ENCODE measurements at regions of chr18 and their contacts with region 1.

Region 1: DNA sequence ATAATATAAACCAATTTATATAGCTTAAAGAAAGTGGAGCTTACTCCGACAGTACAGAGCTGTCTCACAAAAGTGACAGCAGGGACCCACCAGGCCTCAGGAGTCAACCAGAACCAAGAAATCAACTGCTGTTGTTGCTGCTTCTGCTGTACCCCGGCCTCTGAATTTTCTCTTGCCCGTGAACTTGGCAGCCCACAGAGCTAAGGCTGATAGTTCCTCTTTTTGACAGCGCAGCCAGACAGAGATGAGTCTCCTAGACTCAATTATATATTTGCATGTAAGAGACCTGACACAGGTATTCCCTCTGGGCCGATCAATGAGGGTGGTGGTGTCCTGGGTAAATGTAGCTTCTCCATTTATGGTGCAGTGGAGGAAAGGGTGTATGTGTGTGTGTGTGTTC is 109.4 kb downstream of the KCTD1 start:
- DNase-seq: no peak
- ATAC-seq: peak; percentile 96
- H3K4me3 ChIP-seq: no peak overlapping the region
- H3K27ac ChIP-seq: no peak overlapping the region
- H3K4me1 ChIP-seq: peaks cover 10% of the 10 kb centered on the region; the same call in 1 of the 2 replicates
- H3K27me3 ChIP-seq: no peaks in the 10 kb centered on the region
- CTCF ChIP-seq: no peak
- EP300 ChIP-seq: no peak
- POLR2A ChIP-seq: no peak
- RAD21 ChIP-seq: 0 out of 2 replicates have a peak, but pooled peaks have one; percentile 2

Region 2: GRCh38 chr18:26121476-26121875 is 317.5 kb before region 1 on chr18:
- CTCF ChIA-PET with region 1: no interaction called
- POLR2A ChIA-PET with region 1: no interaction called
- RAD21 ChIA-PET with region 1: no interaction called
- SMC1A ChIA-PET with region 1: no interaction called
- in situ Hi-C with region 1: no loop called
- intact Hi-C with region 1: no loop called
- DNase-seq: no peak
- ATAC-seq: no peak
- H3K4me3 ChIP-seq: no peak overlapping the region
- H3K27ac ChIP-seq: no peak overlapping the region
- H3K4me1 ChIP-seq: no peaks in the 10 kb centered on the region
- H3K27me3 ChIP-seq: no peaks in the 10 kb centered on the region; a peak in 1 of 4 replicates
- CTCF ChIP-seq: no peak
- EP300 ChIP-seq: no peak
- POLR2A ChIP-seq: no peak
- RAD21 ChIP-seq: no peak

Region 3: GRCh38 chr18:26370037-26370436 is 68.9 kb before region 1 on chr18:
- CTCF ChIA-PET with region 1: no interaction called
- POLR2A ChIA-PET with region 1: no interaction called
- RAD21 ChIA-PET with region 1: no interaction called
- SMC1A ChIA-PET with region 1: no interaction called
- in situ Hi-C with region 1: no loop called
- intact Hi-C with region 1: no loop called
- DNase-seq: no peak
- ATAC-seq: no peak
- H3K4me3 ChIP-seq: no peak overlapping the region
- H3K27ac ChIP-seq: no peak overlapping the region
- H3K4me1 ChIP-seq: no peaks in the 10 kb centered on the region
- H3K27me3 ChIP-seq: no peaks in the 10 kb centered on the region
- CTCF ChIP-seq: no peak
- EP300 ChIP-seq: no peak
- POLR2A ChIP-seq: no peak
- RAD21 ChIP-seq: no peak

Region 4: DNA sequence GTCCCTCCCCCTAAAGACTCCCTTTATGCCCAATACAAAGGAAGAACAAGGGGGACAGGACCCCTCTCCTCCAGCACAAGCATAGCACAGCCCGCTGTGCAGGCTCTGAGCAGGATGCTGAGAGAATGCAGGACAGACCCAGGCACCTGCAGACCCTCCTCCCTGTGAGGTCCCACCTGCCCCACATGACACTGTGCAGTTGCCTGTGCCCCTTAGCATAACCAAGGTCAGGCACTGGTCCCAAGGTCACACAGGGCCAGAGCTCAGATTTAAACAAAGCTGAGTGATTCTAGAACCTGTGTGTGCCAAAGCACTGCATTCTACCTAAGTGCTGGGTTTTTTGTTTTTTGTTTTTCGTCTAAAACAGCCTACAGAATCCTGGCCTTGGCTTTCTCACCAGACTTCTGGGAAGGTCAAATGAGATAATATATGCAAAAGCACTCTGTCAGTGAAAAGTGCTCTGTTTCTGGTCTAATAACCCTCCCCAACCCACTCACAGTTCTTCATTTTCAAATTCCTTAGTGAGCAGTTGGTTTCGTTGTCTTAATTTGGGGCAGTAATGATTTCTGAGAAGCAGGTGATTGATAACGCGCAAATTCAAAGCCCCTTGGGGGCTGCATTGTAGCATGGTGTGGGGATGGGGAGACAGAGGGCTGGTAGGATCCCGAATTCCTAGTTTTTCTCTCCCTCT is 16.4 kb before region 1 on chr18:
- CTCF ChIA-PET with region 1: interaction called, 4 read pairs
- POLR2A ChIA-PET with region 1: interaction called, 5 read pairs
- RAD21 ChIA-PET with region 1: no interaction called
- SMC1A ChIA-PET with region 1: interaction called, 16 read pairs
- in situ Hi-C with region 1: no loop called
- intact Hi-C with region 1: no loop called
- DNase-seq: no peak
- ATAC-seq: peak; percentile 74
- H3K4me3 ChIP-seq: no peak overlapping the region
- H3K27ac ChIP-seq: peak overlapping the region; percentile 2; the same call in 1 of the 2 replicates
- H3K4me1 ChIP-seq: peaks cover 27% of the 10 kb centered on the region
- H3K27me3 ChIP-seq: no peaks in the 10 kb centered on the region
- CTCF ChIP-seq: no peak
- EP300 ChIP-seq: no peak
- POLR2A ChIP-seq: no peak
- RAD21 ChIP-seq: no peak

Region 5: DNA sequence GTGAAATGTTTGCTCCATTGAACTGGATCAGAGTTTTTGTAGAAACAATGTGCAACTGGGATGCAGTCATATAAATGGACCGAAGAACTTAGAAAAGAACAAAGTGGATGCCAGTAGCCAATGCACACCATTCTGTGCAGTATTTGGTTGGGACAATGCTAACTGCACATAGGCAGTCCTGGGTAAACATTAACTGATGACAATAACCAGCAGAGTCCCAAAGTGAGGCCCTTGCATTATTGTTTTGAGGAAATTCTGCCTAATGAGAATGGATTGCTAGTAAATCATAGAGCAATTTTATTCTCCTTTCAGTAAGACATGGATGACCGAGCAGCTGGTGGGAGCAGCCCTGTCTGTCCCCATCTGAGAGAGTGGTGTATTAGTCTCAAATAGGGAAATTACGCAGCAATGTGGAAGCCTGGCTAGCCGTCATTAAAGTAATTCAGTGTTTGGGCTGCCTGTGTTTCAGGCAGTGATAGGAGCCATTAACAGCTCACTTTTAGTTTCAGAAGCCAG is 14.5 kb after region 1 on chr18:
- CTCF ChIA-PET with region 1: interaction called, 12 read pairs
- POLR2A ChIA-PET with region 1: interaction called, 7 read pairs
- RAD21 ChIA-PET with region 1: interaction called, 12 read pairs
- SMC1A ChIA-PET with region 1: interaction called, 23 read pairs
- in situ Hi-C with region 1: no loop called
- intact Hi-C with region 1: no loop called
- DNase-seq: no peak
- ATAC-seq: peak; percentile 45
- H3K4me3 ChIP-seq: no peak overlapping the region
- H3K27ac ChIP-seq: no peak overlapping the region
- H3K4me1 ChIP-seq: peaks cover 20% of the 10 kb centered on the region
- H3K27me3 ChIP-seq: no peaks in the 10 kb centered on the region
- CTCF ChIP-seq: no peak
- EP300 ChIP-seq: no peak
- POLR2A ChIP-seq: no peak
- RAD21 ChIP-seq: no peak

Region 6: GRCh38 chr18:26458526-26459232 is 19.7 kb after region 1 on chr18:
- CTCF ChIA-PET with region 1: interaction called, 12 read pairs
- POLR2A ChIA-PET with region 1: interaction called, 4 read pairs
- RAD21 ChIA-PET with region 1: interaction called, 6 read pairs
- SMC1A ChIA-PET with region 1: interaction called, 21 read pairs
- in situ Hi-C with region 1: no loop called
- intact Hi-C with region 1: no loop called
- DNase-seq: peak; percentile 70
- ATAC-seq: peak; percentile 75
- H3K4me3 ChIP-seq: no peak overlapping the region
- H3K27ac ChIP-seq: peak overlapping the region; percentile 75
- H3K4me1 ChIP-seq: peaks cover 48% of the 10 kb centered on the region
- H3K27me3 ChIP-seq: no peaks in the 10 kb centered on the region
- CTCF ChIP-seq: no peak
- EP300 ChIP-seq: peak; percentile 48 to 68; a peak in 2 of 4 replicates
- POLR2A ChIP-seq: peak; percentile 33; the same call in 1 of the 2 replicates
- RAD21 ChIP-seq: no peak

Region 7: GRCh38 chr18:26487437-26487836 is 48.5 kb after region 1 on chr18:
- CTCF ChIA-PET with region 1: no interaction called
- POLR2A ChIA-PET with region 1: interaction called, 8 read pairs
- RAD21 ChIA-PET with region 1: interaction called, 12 read pairs
- SMC1A ChIA-PET with region 1: interaction called, 4 read pairs
- in situ Hi-C with region 1: no loop called
- intact Hi-C with region 1: no loop called
- DNase-seq: peak; percentile 23
- ATAC-seq: peak; percentile 99
- H3K4me3 ChIP-seq: no peak overlapping the region
- H3K27ac ChIP-seq: no peak overlapping the region
- H3K4me1 ChIP-seq: no peaks in the 10 kb centered on the region
- H3K27me3 ChIP-seq: no peaks in the 10 kb centered on the region
- CTCF ChIP-seq: no peak
- EP300 ChIP-seq: peak in 1 of 2 experiments; percentile 75; a peak in 2 of 4 replicates
- POLR2A ChIP-seq: no peak
- RAD21 ChIP-seq: no peak

Region 8: GRCh38 chr18:26548429-26549262 is 109.7 kb after region 1 on chr18 and contains the start of gene KCTD1:
- CTCF ChIA-PET with region 1: interaction called, 10 read pairs
- POLR2A ChIA-PET with region 1: no interaction called
- RAD21 ChIA-PET with region 1: no interaction called
- SMC1A ChIA-PET with region 1: no interaction called
- in situ Hi-C with region 1: no loop called
- intact Hi-C with region 1: no loop called
- DNase-seq: no peak
- ATAC-seq: peak; percentile 70
- H3K4me3 ChIP-seq: peak within 1 kb of the TSS; percentile 70
- H3K27ac ChIP-seq: peak within 1 kb of the TSS; percentile 67
- H3K4me1 ChIP-seq: peaks cover 31% of the 10 kb centered on the region
- H3K27me3 ChIP-seq: peaks cover 4 to 8% of the 10 kb centered on the region in 2 experiments
- CTCF ChIP-seq: no peak
- EP300 ChIP-seq: no peak
- POLR2A ChIP-seq: peak; percentile 46; the same call in 1 of the 2 replicates
- RAD21 ChIP-seq: no peak
- polyA plus RNA-seq, gene KCTD1: 1.5 to 1.8 TPM

Region 9: GRCh38 chr18:26703170-26703930 is 264.4 kb after region 1 on chr18:
- CTCF ChIA-PET with region 1: no interaction called
- POLR2A ChIA-PET with region 1: no interaction called
- RAD21 ChIA-PET with region 1: no interaction called
- SMC1A ChIA-PET with region 1: no interaction called
- in situ Hi-C with region 1: no loop called
- intact Hi-C with region 1: no loop called
- DNase-seq: no peak
- ATAC-seq: no peak
- H3K4me3 ChIP-seq: no peak overlapping the region
- H3K27ac ChIP-seq: no peak overlapping the region
- H3K4me1 ChIP-seq: no peaks in the 10 kb centered on the region; the same call in 1 of the 2 replicates
- H3K27me3 ChIP-seq: 0 out of 4 replicates have a peak, but pooled peaks cover 0 to 3% of the 10 kb centered on the region in 2 experiments
- CTCF ChIP-seq: no peak
- EP300 ChIP-seq: no peak
- POLR2A ChIP-seq: no peak
- RAD21 ChIP-seq: no peak

Measured in GM12878 (cell line).